Head of caudate nucleus (tissue), 42 donors: ENCODE measurements at regions of chr18 and their contacts with region 1.

Region 1: GRCh38 chr18:54679318-54680149 is 88.5 kb downstream of the DYNAP start:
- DNase-seq: peak in 9 of 42 donors; percentile 8 to 55 (median 22)

Region 2: GRCh38 chr18:54444319-54444914 is 235.1 kb before region 1 on chr18:
- intact Hi-C with region 1: loop called (anchors 10 kb)
- DNase-seq: peak; percentile 11 to 77 (median 53)

Region 3: DNA sequence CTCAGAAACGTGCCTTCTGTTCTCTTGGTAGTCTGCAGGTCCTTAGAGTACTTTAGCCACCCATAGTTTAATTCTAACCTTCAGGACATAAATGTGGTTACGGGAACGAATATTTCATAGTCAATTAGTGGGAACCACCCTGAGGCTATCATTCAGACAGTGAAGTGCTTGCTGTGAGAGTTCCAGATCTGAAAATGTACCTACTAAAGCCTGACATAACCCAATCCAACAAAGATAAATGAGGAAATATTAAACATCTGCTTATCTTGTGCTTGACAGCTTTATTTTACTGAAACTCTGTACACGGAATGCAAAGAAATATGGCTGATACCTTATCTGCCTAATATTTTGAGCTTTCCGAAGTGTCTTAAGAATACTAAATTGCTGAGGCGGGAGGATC is 191.7 kb after region 1 on chr18:
- intact Hi-C with region 1: no loop called
- DNase-seq: no peak

Region 4: DNA sequence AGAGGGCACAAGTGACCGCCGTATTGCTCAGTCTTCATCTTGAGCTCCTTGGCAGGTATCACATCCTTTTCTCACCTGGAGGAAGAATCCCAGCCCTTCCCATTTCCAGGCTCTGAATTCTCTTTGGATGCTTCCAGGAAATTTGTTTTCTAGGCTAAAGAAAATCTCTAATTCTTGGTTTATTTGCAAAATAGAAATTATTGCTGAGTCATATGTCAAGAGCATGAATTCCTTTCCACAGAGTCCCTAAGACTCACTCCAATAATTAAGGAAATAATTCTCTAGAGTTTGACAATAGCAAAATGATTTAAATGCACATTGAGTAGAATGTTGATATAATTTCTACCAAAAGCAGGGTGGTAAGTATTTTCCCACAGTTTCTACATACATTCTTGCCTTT is 296.1 kb after region 1 on chr18:
- intact Hi-C with region 1: loop called (anchors 5 kb)
- DNase-seq: no peak